ENCODE measurements at regions of chr11 and their contacts with region 1.

Region 1: GRCh38 chr11:6705905-6706535 is 22.9 kb upstream of the MRPL17 start:
- DNase-seq: peak; percentile 66
- H3K4me3 ChIP-seq: no peak overlapping the region
- H3K27ac ChIP-seq: no peak overlapping the region
- H3K4me1 ChIP-seq: peaks cover 6% of the 10 kb centered on the region
- H3K27me3 ChIP-seq: no peaks in the 10 kb centered on the region
- CTCF ChIP-seq: peak; percentile 72 to 78
- POLR2A ChIP-seq: no peak

Region 2: GRCh38 chr11:6603287-6604080 is 102.5 kb before region 1 on chr11 and contains the starts of genes ILK and RRP8:
- CTCF ChIA-PET with region 1: interaction called, 16 read pairs
- POLR2A ChIA-PET with region 1: no interaction called
- dilution Hi-C with region 1: no loop called
- intact Hi-C with region 1: no loop called
- DNase-seq: peak; percentile 93
- H3K4me3 ChIP-seq: peak within 1 kb of the TSS; percentile 62 to 97 (median 90)
- H3K27ac ChIP-seq: peak within 1 kb of the TSS; percentile 83
- H3K4me1 ChIP-seq: peaks cover 44% of the 10 kb centered on the region
- H3K27me3 ChIP-seq: no peaks in the 10 kb centered on the region
- CTCF ChIP-seq: no peak
- POLR2A ChIP-seq: peak; percentile 87
- total RNA-seq, gene ILK: 221 and 233 TPM in 2 replicates
- total RNA-seq, gene RRP8: 19.4 and 23.3 TPM in 2 replicates

Region 3: GRCh38 chr11:6719576-6719975 is 13.6 kb after region 1 on chr11:
- CTCF ChIA-PET with region 1: interaction called, 21 read pairs
- POLR2A ChIA-PET with region 1: no interaction called
- dilution Hi-C with region 1: no loop called
- intact Hi-C with region 1: no loop called
- DNase-seq: no peak
- H3K4me3 ChIP-seq: no peak overlapping the region
- H3K27ac ChIP-seq: no peak overlapping the region
- H3K4me1 ChIP-seq: peaks cover 15% of the 10 kb centered on the region
- H3K27me3 ChIP-seq: peaks cover 3 to 10% of the 10 kb centered on the region in 2 experiments
- CTCF ChIP-seq: no peak
- POLR2A ChIP-seq: no peak

Region 4: DNA sequence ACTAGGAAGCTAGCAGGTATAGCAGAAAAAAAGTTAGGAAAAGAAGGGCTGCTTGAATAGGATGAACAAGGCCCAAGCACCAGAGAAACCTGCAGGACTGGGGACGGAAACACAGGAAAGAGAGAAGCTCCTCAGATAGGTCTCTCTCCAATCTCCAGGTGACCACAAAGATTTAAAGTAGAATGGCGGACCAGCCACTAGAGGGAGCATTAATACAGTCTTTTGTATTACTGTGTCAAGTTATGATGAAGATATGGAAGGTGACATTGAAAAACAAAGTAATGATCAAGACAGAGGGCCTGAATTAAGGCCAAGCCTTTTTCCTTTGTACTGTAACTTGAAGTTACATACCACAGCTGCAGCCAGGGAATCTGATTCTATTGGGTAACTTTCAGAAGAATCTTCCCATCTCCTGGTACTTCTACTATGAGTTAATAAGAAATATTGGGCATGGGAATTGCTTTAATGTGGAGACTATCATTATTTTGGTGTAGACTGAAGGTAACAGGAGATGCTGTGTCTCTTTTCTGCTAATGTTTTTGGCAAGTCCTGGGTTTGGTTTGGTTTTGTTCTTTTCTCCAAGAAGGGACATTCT is 31.9 kb after region 1 on chr11:
- CTCF ChIA-PET with region 1: interaction called, 14 read pairs
- POLR2A ChIA-PET with region 1: no interaction called
- dilution Hi-C with region 1: no loop called
- intact Hi-C with region 1: loop called (anchors 5 kb)
- DNase-seq: peak; percentile 64
- H3K4me3 ChIP-seq: no peak overlapping the region
- H3K27ac ChIP-seq: no peak overlapping the region
- H3K4me1 ChIP-seq: peaks cover 12% of the 10 kb centered on the region
- H3K27me3 ChIP-seq: peaks cover 0 to 3% of the 10 kb centered on the region in 2 experiments
- CTCF ChIP-seq: peak; percentile 53 to 66
- POLR2A ChIP-seq: no peak